ENCODE measurements at regions of chrX and their contacts with region 1.

Region 1: GRCh38 chrX:67780694-67781109 is 236.9 kb downstream of the AR start:
- DNase-seq: peak; percentile 79 to 91 (median 82)
- ATAC-seq: peak; percentile 86 to 93 (median 92)
- H3K4me3 ChIP-seq: peak overlapping the region in 1 of 12 donors; percentile 4
- H3K27ac ChIP-seq: peak overlapping the region; percentile 22 to 89 (median 78)
- H3K4me1 ChIP-seq: peaks cover 0 to 40% (median 19%) of the 10 kb centered on the region in 12 donors
- H3K27me3 ChIP-seq: no peaks in the 10 kb centered on the region
- CTCF ChIP-seq: no peak
- POLR2A ChIP-seq: no peak

Region 2: GRCh38 chrX:67543818-67544217 is 236.9 kb before region 1 on chrX and contains the start of gene AR:
- intact Hi-C with region 1: loop called in 4 of 10 experiments (anchors 10 kb)
- DNase-seq: peak; percentile 66 to 81 (median 76)
- ATAC-seq: peak; percentile 52 to 82 (median 74)
- H3K4me3 ChIP-seq: peak within 1 kb of the TSS; percentile 3 to 63 (median 54)
- H3K27ac ChIP-seq: peak within 1 kb of the TSS in 10 of 12 donors; percentile 43 to 79 (median 66)
- H3K4me1 ChIP-seq: peaks cover 0 to 5% (median 0%) of the 10 kb centered on the region in 12 donors
- H3K27me3 ChIP-seq: peaks cover 0 to 57% (median 0%) of the 10 kb centered on the region in 9 donors
- CTCF ChIP-seq: no peak
- POLR2A ChIP-seq: peak in 1 of 2 donors; percentile 30
- total RNA-seq, gene AR: 9.5 to 30.1 (median 20.1) TPM

Region 3: GRCh38 chrX:67563469-67564448 is 216.9 kb before region 1 on chrX:
- intact Hi-C with region 1: loop called in 1 of 10 experiments (anchors 10 kb)
- DNase-seq: peak in 3 of 5 donors; percentile 23 to 39 (median 33)
- ATAC-seq: peak; percentile 69 to 93 (median 76)
- H3K4me3 ChIP-seq: no peak overlapping the region
- H3K27ac ChIP-seq: peak overlapping the region; percentile 22 to 90 (median 65)
- H3K4me1 ChIP-seq: peaks cover 0 to 15% (median 0%) of the 10 kb centered on the region in 12 donors
- H3K27me3 ChIP-seq: no peaks in the 10 kb centered on the region
- CTCF ChIP-seq: no peak
- POLR2A ChIP-seq: no peak

Region 4: GRCh38 chrX:67734111-67734753 is 46.5 kb before region 1 on chrX:
- intact Hi-C with region 1: loop called in 4 of 10 experiments (anchors 5 to 10 kb)
- DNase-seq: no peak
- ATAC-seq: no peak
- H3K4me3 ChIP-seq: no peak overlapping the region
- H3K27ac ChIP-seq: no peak overlapping the region
- H3K4me1 ChIP-seq: no peaks in the 10 kb centered on the region
- H3K27me3 ChIP-seq: peaks cover 0 to 9% (median 0%) of the 10 kb centered on the region in 9 donors
- CTCF ChIP-seq: no peak
- POLR2A ChIP-seq: no peak